ENCODE measurements at regions of chr4 and their contacts with region 1.

Region 1: GRCh38 chr4:118280501-118281218 is 72.1 kb downstream of the PRSS12 start:
- DNase-seq: peak; percentile 69
- H3K4me3 ChIP-seq: peak overlapping the region in 1 of 4 donors; percentile 57
- H3K27ac ChIP-seq: peak overlapping the region; percentile 34 to 96 (median 94)
- H3K4me1 ChIP-seq: peaks cover 12 to 34% (median 27%) of the 10 kb centered on the region in 4 donors
- H3K27me3 ChIP-seq: no peaks in the 10 kb centered on the region
- CTCF ChIP-seq: peak; percentile 31 to 70 (median 54)
- EP300 ChIP-seq: no peak
- POLR2A ChIP-seq: no peak

Region 2: DNA sequence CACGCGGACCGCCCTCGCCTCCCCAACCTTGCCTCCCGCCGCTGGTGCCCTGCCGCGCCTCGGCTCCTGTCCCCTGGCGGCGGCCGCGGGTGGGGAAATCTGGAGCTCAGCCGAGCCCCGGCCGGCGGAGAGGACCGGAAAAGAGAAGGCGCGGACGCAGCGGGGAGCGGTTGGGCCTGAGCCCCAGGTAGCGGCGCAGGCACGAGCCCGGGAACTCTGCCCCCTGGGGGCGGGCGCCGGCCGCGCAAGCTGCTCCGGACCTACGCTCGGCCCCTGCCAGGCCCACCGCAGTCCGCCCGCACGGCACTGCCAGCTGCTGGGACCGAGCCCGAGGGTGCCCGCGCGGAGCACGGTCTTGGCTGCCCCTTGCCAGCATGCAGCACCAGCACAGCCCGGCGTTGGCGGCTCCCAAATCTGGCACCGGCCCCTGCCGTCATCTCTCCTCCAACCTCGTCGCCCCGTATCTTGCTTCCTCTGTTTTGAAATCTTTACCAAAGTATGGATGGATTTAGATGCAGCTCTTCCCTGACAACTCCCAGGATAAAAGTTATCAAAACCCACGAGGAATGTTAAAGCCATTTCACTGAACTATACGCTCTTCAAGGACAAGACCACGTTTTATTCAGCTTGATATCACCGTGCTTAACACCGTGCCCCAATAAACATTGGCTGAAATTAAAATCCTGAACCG is 72.3 kb after region 1 on chr4 and contains the start of gene PRSS12:
- in situ Hi-C with region 1: loop called in 1 of 4 experiments (anchors 10 kb)
- intact Hi-C with region 1: loop called (anchors 5 kb)
- DNase-seq: peak; percentile 85
- H3K4me3 ChIP-seq: peak within 1 kb of the TSS; percentile 47 to 68 (median 49)
- H3K27ac ChIP-seq: peak within 1 kb of the TSS; percentile 72 to 85 (median 83)
- H3K4me1 ChIP-seq: peaks cover 3 to 33% (median 7%) of the 10 kb centered on the region in 4 donors
- H3K27me3 ChIP-seq: peaks cover 37% of the 10 kb centered on the region
- CTCF ChIP-seq: peak; percentile 58 to 90 (median 83)
- EP300 ChIP-seq: no peak
- POLR2A ChIP-seq: no peak
- total RNA-seq, gene PRSS12: 58.0 to 146 (median 84.3) TPM

Measured in transverse colon (tissue), 4 donors.